Naive thymus-derived CD4-positive, alpha-beta T cell (primary cell): ENCODE measurements at regions of chr5 and their contacts with region 1.

Region 1: DNA sequence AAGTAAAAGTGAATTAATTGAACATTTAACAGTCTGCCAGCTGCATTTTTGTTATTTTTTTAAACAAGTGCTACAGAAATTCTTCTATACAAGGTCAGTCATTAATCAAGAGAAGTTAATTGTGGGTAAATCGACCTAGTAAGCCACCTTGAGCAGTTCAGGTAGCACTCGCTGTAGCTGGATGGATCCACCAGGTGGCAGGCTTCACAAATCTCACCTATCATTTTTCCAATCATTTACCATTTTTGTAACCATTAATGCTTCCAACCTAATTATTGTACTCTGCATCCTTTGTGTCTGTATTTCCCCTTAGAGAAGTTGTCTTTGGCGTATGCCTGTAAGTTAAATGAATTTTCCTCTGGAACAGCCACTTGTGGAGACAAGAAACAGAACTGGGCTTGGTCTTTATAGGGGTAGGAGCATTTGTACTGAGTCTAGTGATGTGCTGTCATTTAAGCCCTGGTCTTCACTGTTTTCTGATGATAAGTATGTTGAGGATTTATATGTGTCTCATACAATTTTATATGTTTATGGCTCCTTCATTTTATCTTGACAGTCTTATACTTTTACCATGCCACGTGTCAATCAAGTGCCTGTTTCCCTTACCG is 39.5 kb downstream of the CD180 start:
- DNase-seq: peak in 7 of 9 donors; percentile 28 to 64 (median 52)
- ATAC-seq: peak; percentile 75
- H3K4me3 ChIP-seq: no peak overlapping the region
- H3K4me3 Mint-ChIP-seq: peak overlapping the region in 4 of 10 donors; percentile 2 to 53 (median 48)
- H3K27ac ChIP-seq: no peak overlapping the region
- H3K27ac Mint-ChIP-seq: peak overlapping the region in 8 of 9 donors; percentile 49 to 100 (median 74)
- H3K4me1 ChIP-seq: peaks cover 41 to 42% of the 10 kb centered on the region in 2 donors
- H3K4me1 Mint-ChIP-seq: peaks cover 25 to 61% (median 55%) of the 10 kb centered on the region in 7 donors
- H3K27me3 ChIP-seq: no peaks in the 10 kb centered on the region
- H3K27me3 Mint-ChIP-seq: no peaks in the 10 kb centered on the region

Region 2: DNA sequence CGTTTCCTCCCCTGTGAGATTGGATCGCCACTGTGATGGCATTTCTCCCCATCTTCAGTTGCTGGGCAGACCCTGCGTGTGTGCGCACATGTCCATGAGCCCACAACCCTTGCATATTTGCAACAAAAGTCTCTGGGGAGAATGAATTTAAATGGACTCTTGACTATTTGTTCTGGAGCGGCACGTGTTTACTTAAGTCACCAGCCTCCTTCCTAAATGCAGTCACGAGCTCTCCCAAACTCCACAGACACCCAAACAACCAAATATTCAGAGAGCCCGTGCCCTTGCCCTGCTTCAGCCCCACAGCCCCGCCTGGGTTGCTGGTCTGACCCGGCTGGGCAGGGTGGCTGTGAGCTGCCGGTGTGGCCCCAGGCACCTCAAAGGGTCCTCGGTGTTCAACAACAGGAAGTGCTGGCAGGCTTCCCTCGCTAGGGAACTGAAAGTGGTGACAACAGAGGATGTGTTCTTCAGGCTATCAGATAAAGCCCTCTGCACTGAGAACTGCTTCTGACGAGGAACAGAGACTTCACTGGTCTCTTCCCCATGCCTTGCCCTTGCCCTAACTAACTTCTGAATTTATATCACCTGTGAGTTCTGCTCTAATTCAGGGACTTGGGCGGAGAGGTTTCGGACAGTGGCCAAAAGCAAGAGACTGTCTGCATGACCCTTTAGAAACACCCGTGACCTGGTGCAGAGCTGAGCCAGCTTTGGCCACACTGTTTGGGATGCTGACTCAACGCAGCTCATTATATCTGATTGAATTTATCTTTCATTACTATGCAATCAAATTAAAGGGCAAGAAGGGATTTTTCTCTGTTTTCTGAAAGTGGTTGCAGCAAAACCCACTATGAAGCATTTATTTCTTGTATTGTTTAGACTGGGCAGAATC is 58.7 kb after region 1 on chr5:
- CTCF ChIA-PET with region 1: interaction called, 370 read pairs
- POLR2A ChIA-PET with region 1: interaction called, 348 read pairs
- intact Hi-C with region 1: no loop called
- DNase-seq: peak; percentile 52 to 85 (median 76)
- ATAC-seq: peak; percentile 98
- H3K4me3 ChIP-seq: peak overlapping the region; percentile 6
- H3K4me3 Mint-ChIP-seq: peak overlapping the region; percentile 32 to 95 (median 77)
- H3K27ac ChIP-seq: peak overlapping the region; percentile 74
- H3K27ac Mint-ChIP-seq: peak overlapping the region; percentile 95 to 100 (median 99)
- H3K4me1 ChIP-seq: peaks cover 42 to 45% of the 10 kb centered on the region in 2 donors
- H3K4me1 Mint-ChIP-seq: peaks cover 37 to 74% (median 66%) of the 10 kb centered on the region in 7 donors
- H3K27me3 ChIP-seq: no peaks in the 10 kb centered on the region
- H3K27me3 Mint-ChIP-seq: no peaks in the 10 kb centered on the region

Region 3: DNA sequence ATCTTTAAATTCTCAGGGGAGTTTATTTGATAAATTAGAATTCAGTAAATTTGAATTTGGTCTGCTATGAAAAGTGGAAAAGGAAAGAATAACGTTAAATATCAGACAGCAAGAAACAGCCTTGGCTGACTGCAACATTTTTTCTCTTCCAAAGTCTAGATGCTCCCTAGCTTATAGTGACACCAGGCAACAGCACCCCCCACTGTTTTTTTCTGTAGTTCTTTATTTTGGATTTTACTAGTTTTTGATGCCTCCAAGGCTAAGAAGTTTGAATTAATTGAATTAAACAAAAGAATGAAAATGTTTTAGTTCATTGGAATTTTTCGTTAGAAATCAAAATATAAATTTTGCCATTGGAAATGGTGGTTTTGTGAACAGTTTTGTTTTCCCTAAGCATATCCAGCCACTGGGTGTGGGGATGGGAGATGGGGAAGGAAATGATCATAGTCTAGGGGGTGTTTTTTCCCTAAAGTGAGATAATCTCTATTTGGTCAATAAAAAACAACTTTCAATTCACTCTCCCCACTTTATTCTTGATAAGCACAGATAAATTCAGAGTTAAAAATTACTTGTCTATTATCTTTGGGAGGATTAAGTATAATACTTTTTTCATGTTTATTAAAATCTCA is 238.8 kb after region 1 on chr5:
- CTCF ChIA-PET with region 1: no interaction called
- POLR2A ChIA-PET with region 1: no interaction called
- intact Hi-C with region 1: loop called in 1 of 2 experiments (anchors 5 kb)
- DNase-seq: no peak
- ATAC-seq: no peak
- H3K4me3 ChIP-seq: no peak overlapping the region
- H3K4me3 Mint-ChIP-seq: no peak overlapping the region
- H3K27ac ChIP-seq: no peak overlapping the region
- H3K27ac Mint-ChIP-seq: no peak overlapping the region
- H3K4me1 ChIP-seq: no peaks in the 10 kb centered on the region
- H3K4me1 Mint-ChIP-seq: peaks cover 0 to 4% (median 0%) of the 10 kb centered on the region in 7 donors
- H3K27me3 ChIP-seq: no peaks in the 10 kb centered on the region
- H3K27me3 Mint-ChIP-seq: peaks cover 0 to 6% (median 0%) of the 10 kb centered on the region in 5 donors

Region 4: DNA sequence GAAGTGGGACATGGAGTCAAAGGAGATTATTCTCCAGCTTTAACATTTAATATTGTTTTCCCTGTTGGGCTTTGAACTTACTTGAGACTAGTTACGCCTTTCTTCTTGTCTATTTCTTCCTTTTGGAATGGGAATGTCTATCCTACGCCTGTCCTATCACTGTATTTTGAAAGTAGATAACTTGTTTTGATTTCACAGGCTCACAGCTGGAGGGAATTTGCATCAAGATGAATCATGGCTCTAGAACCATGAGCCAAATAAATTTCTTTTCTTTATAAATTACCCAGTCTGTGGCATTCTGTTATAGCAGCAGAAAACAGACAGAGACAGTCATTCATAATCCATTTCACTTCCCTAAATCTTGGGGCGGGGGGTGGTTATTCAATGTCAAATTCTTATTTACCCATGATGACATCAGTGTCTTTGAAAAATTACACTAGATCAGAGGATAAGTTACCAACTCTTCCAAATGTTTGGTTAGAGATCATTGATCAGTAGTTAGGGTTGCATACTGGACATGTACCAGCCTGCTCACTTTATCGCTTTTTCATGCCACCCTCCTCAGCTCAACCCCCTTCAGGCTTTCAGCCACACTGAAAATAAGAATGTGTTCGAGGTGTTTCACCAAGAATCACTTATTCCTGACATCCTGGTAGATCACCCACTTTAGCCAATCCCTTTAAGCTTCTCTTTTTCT is 638.8 kb after region 1 on chr5:
- CTCF ChIA-PET with region 1: no interaction called
- POLR2A ChIA-PET with region 1: no interaction called
- intact Hi-C with region 1: no loop called
- DNase-seq: no peak
- ATAC-seq: no peak
- H3K4me3 ChIP-seq: no peak overlapping the region
- H3K4me3 Mint-ChIP-seq: no peak overlapping the region
- H3K27ac ChIP-seq: no peak overlapping the region
- H3K27ac Mint-ChIP-seq: no peak overlapping the region
- H3K4me1 ChIP-seq: no peaks in the 10 kb centered on the region
- H3K4me1 Mint-ChIP-seq: no peaks in the 10 kb centered on the region
- H3K27me3 ChIP-seq: no peaks in the 10 kb centered on the region
- H3K27me3 Mint-ChIP-seq: peaks cover 0 to 16% (median 2%) of the 10 kb centered on the region in 5 donors